T-cell (primary cell): ENCODE measurements at regions of chr4 and their contacts with region 1.

Region 1: DNA sequence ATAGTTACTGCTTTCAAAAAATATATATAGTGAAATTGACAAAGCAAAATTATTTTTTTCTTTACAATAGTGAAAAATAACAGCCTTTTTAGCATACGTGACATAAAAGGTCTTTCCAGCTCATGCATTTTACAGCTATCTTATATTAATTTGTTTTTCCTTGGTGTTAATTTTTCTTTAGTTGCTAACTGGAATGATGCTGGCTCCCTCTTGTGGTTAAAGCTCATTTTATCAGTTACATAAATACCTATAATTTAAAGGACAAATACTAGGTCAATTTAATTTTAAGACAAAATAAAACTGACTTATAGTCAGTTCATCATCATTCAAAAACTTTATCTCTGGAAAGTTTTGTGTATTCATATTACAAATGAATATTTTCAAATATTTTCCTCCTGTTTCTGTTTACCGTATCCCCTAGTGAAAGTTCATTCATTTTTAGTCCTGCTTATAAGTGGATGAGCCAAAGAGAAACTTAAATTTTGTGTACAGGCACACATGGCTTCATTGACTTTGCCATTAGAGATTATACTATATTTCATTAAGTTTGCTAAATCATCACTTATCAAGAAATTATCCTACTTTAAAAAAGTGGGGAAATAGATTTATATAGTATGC is 9.9 kb upstream of the ANAPC4 start:
- DNase-seq: peak in 1 of 35 experiments; percentile 64
- ATAC-seq: no peak
- H3K4me3 ChIP-seq: no peak overlapping the region
- H3K4me3 Mint-ChIP-seq: no peak overlapping the region
- H3K27ac ChIP-seq: no peak overlapping the region
- H3K27ac Mint-ChIP-seq: no peak overlapping the region
- H3K4me1 ChIP-seq: no peaks in the 10 kb centered on the region
- H3K4me1 Mint-ChIP-seq: no peaks in the 10 kb centered on the region
- H3K27me3 ChIP-seq: no peaks in the 10 kb centered on the region
- H3K27me3 Mint-ChIP-seq: no peaks in the 10 kb centered on the region

Region 2: DNA sequence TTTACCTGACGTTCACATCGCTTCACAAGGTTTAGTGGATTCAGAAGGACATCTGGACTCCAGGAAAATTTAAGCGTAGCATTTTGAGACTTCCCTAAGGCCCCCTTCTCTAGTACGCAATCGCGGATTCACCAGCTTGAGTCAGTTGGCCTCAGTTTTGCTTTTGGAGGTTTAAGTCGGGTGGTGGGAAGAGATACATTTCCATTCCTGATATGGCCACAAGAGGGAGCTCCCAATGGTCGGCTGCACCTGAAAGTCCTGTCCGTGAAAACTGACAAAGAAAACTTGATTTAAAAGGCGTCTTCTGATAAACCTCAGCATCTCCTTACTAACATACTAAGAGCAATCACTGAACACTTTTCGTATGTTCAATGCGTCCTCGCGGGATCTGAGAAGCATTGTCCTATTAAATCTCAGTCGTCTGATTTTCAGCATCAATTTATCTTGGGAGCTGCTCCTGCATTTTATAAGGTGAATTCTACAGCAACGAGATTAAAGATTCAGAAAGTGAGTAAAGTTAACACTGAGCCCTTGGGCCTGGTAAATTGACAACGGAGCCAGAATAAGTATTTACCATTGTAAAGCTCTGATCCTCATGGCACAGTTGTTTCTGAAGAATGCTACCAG is 386.9 kb before region 1 on chr4:
- CTCF ChIA-PET with region 1: interaction called, 13 to 34 read pairs
- POLR2A ChIA-PET with region 1: no interaction called
- DNase-seq: peak in 29 of 35 experiments; percentile 2 to 69 (median 25)
- ATAC-seq: peak in 1 of 4 experiments; percentile 33
- H3K4me3 ChIP-seq: no peak overlapping the region
- H3K4me3 Mint-ChIP-seq: peak overlapping the region in 2 of 3 donors; percentile 38 to 56
- H3K27ac ChIP-seq: no peak overlapping the region
- H3K27ac Mint-ChIP-seq: no peak overlapping the region
- H3K4me1 ChIP-seq: peaks cover 0 to 8% of the 10 kb centered on the region in 2 experiments
- H3K4me1 Mint-ChIP-seq: peaks cover 7 to 11% (median 9%) of the 10 kb centered on the region in 3 donors
- H3K27me3 ChIP-seq: peaks cover 0 to 10% of the 10 kb centered on the region in 2 experiments
- H3K27me3 Mint-ChIP-seq: peaks cover 23 to 24% of the 10 kb centered on the region in 2 donors

Region 3: GRCh38 chr4:25180524-25181131 is 186.5 kb before region 1 on chr4:
- CTCF ChIA-PET with region 1: interaction called, 4 to 15 read pairs
- POLR2A ChIA-PET with region 1: no interaction called
- DNase-seq: peak in 20 of 35 experiments; percentile 6 to 68 (median 22)
- ATAC-seq: peak in 3 of 4 experiments; percentile 46 to 64 (median 61)
- H3K4me3 ChIP-seq: no peak overlapping the region
- H3K4me3 Mint-ChIP-seq: no peak overlapping the region
- H3K27ac ChIP-seq: no peak overlapping the region
- H3K27ac Mint-ChIP-seq: no peak overlapping the region
- H3K4me1 ChIP-seq: peaks cover 8 to 10% of the 10 kb centered on the region in 2 experiments
- H3K4me1 Mint-ChIP-seq: peaks cover 26 to 51% (median 40%) of the 10 kb centered on the region in 3 donors
- H3K27me3 ChIP-seq: no peaks in the 10 kb centered on the region
- H3K27me3 Mint-ChIP-seq: no peaks in the 10 kb centered on the region

Region 4: GRCh38 chr4:25234390-25235370 is 132.4 kb before region 1 on chr4:
- CTCF ChIA-PET with region 1: interaction called in 1 of 2 experiments, 11 read pairs
- POLR2A ChIA-PET with region 1: no interaction called
- DNase-seq: peak in 31 of 35 experiments; percentile 6 to 81 (median 21)
- ATAC-seq: peak; percentile 39 to 49 (median 42)
- H3K4me3 ChIP-seq: peak overlapping the region; percentile 91 to 93
- H3K4me3 Mint-ChIP-seq: peak overlapping the region; percentile 85 to 95 (median 90)
- H3K27ac ChIP-seq: peak overlapping the region; percentile 88
- H3K27ac Mint-ChIP-seq: peak overlapping the region; percentile 94 to 98
- H3K4me1 ChIP-seq: peaks cover 11 to 26% of the 10 kb centered on the region in 2 experiments
- H3K4me1 Mint-ChIP-seq: peaks cover 44 to 52% (median 46%) of the 10 kb centered on the region in 3 donors
- H3K27me3 ChIP-seq: no peaks in the 10 kb centered on the region
- H3K27me3 Mint-ChIP-seq: no peaks in the 10 kb centered on the region

Region 5: GRCh38 chr4:25284466-25284865 is 82.6 kb before region 1 on chr4:
- CTCF ChIA-PET with region 1: no interaction called
- POLR2A ChIA-PET with region 1: no interaction called
- DNase-seq: no peak
- ATAC-seq: no peak
- H3K4me3 ChIP-seq: no peak overlapping the region
- H3K4me3 Mint-ChIP-seq: no peak overlapping the region
- H3K27ac ChIP-seq: no peak overlapping the region
- H3K27ac Mint-ChIP-seq: no peak overlapping the region
- H3K4me1 ChIP-seq: no peaks in the 10 kb centered on the region
- H3K4me1 Mint-ChIP-seq: no peaks in the 10 kb centered on the region
- H3K27me3 ChIP-seq: no peaks in the 10 kb centered on the region
- H3K27me3 Mint-ChIP-seq: peaks cover 2 to 4% of the 10 kb centered on the region in 2 donors

Region 6: GRCh38 chr4:25330905-25331808 is 36.0 kb before region 1 on chr4:
- CTCF ChIA-PET with region 1: interaction called in 1 of 2 experiments, 10 read pairs
- POLR2A ChIA-PET with region 1: no interaction called
- DNase-seq: peak in 1 of 35 experiments; percentile 29
- ATAC-seq: peak; percentile 47 to 62 (median 49)
- H3K4me3 ChIP-seq: peak overlapping the region in 1 of 2 donors; percentile 45
- H3K4me3 Mint-ChIP-seq: peak overlapping the region; percentile 76 to 86 (median 77)
- H3K27ac ChIP-seq: peak overlapping the region; percentile 84
- H3K27ac Mint-ChIP-seq: peak overlapping the region; percentile 93
- H3K4me1 ChIP-seq: peaks cover 0 to 14% of the 10 kb centered on the region in 2 experiments
- H3K4me1 Mint-ChIP-seq: peaks cover 19 to 20% (median 20%) of the 10 kb centered on the region in 3 donors
- H3K27me3 ChIP-seq: no peaks in the 10 kb centered on the region
- H3K27me3 Mint-ChIP-seq: no peaks in the 10 kb centered on the region

Region 7: DNA sequence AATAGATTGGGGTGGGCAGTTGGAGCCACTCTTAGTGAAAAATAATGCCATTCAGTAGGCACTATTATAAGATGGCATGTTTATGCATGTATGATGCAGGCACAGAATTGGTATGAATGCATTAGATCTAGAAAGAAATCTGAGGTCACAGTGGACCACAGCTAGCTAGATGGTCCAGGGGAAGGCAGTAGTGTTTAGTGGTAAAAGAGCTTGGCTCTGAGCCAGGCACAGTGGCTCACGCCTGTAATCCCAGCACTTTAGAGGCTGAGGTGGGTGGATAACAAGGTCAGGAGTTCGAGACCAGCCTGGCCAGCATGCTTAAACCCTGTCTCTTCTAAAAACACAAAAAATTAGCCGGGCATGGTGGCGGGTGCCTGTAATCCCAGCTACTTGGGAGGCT is 245.4 kb after region 1 on chr4:
- CTCF ChIA-PET with region 1: no interaction called
- POLR2A ChIA-PET with region 1: no interaction called
- DNase-seq: no peak
- ATAC-seq: no peak
- H3K4me3 ChIP-seq: no peak overlapping the region
- H3K4me3 Mint-ChIP-seq: no peak overlapping the region
- H3K27ac ChIP-seq: no peak overlapping the region
- H3K27ac Mint-ChIP-seq: no peak overlapping the region
- H3K4me1 ChIP-seq: no peaks in the 10 kb centered on the region
- H3K4me1 Mint-ChIP-seq: no peaks in the 10 kb centered on the region
- H3K27me3 ChIP-seq: no peaks in the 10 kb centered on the region
- H3K27me3 Mint-ChIP-seq: peaks cover 0 to 2% of the 10 kb centered on the region in 2 donors